MCF 10A (cell line): ENCODE measurements at regions of chr9 and their contacts with region 1.

Region 1: DNA sequence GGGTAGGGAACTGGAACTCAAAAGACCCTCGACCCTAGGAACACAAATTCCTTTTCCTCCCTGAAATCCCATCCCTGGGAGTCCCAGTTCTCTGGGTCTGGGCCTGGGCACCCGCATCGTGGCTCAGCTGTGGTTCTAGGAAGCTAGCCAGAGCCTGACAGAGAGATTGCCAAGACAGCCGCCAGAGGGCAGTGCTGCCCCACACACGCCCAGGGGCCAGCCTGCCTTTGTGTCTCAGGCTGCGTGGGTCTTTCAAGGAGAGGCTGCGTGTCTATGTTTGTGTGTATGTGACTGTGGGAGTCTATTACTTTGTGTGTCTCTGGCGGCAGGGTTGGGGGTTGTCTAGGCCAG is 32.0 kb upstream of the TTLL11 start:
- DNase-seq: peak; percentile 79
- H3K4me3 Mint-ChIP-seq: no peak overlapping the region
- H3K27ac Mint-ChIP-seq: no peak overlapping the region
- H3K4me1 Mint-ChIP-seq: peaks cover 18% of the 10 kb centered on the region
- H3K27me3 Mint-ChIP-seq: peaks cover 11% of the 10 kb centered on the region
- CTCF ChIP-seq: peak; percentile 98

Region 2: DNA sequence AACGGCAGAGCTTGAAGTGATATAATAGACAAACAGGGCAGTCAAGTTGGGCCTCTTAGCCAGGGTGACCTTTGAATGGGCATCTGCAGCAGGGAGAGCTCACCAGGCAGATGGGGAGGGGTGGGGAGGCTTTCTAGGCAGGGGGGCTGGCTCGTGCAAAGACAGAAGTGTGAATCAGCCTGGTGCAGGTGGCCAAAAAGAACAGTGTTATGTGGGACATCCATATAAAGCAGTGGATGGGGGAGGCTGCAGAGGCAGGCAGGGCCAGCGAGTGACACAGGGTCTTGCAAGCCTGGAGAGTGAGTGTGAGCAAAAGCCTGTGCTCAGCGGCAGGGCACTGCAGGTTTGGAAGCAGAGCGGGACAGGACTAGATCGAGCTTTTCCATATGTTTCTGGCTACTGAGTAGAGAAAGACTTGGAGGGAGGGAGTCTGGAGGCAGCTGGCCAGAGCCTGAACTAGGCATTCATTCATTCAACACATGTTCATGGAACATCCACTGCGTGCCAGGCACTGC is 17.8 kb before region 1 on chr9:
- CTCF ChIA-PET with region 1: interaction called, 79 read pairs
- POLR2A ChIA-PET with region 1: no interaction called
- intact Hi-C with region 1: no loop called
- DNase-seq: no peak
- H3K4me3 Mint-ChIP-seq: no peak overlapping the region
- H3K27ac Mint-ChIP-seq: no peak overlapping the region
- H3K4me1 Mint-ChIP-seq: no peaks in the 10 kb centered on the region
- H3K27me3 Mint-ChIP-seq: peaks cover under 1% of the 10 kb centered on the region
- CTCF ChIP-seq: no peak

Region 3: DNA sequence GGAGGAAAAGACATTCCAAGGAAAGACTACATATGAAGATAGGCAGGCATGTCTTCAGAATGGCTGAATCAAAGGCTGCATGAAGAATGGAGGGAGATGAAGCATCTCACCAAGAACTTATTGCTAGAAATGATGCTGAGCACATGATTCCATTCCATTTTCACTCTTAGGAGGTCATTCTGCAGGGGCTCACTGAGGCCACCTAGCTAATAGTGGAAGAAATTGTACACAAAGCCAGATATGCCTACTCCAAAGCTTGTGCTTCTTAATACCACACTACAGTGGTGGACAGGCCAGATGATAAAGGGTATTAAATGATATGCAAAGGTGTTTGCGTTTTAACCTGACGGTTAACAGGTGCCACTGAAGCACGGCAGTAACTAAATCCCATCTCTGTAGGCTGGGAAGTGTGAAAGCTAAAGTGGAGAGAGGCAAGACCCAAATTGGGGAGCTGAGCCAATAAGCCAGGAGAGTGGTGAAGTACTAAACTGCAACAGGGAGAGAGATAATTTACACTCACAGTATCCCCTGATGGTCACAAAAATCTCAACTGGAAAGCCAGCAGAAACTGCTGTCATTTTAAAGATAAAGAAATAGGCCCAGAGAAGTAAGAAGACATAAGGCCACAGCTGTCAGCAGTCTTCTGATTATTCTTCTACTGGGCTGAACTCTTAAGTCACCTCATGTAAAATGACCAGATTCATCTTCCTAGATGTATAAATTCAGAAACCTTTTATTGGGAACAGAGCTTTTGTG is 19.9 kb after region 1 on chr9:
- CTCF ChIA-PET with region 1: interaction called, 30 read pairs
- POLR2A ChIA-PET with region 1: no interaction called
- intact Hi-C with region 1: no loop called
- DNase-seq: no peak
- H3K4me3 Mint-ChIP-seq: no peak overlapping the region
- H3K27ac Mint-ChIP-seq: no peak overlapping the region
- H3K4me1 Mint-ChIP-seq: no peaks in the 10 kb centered on the region
- H3K27me3 Mint-ChIP-seq: no peaks in the 10 kb centered on the region
- CTCF ChIP-seq: no peak

Region 4: DNA sequence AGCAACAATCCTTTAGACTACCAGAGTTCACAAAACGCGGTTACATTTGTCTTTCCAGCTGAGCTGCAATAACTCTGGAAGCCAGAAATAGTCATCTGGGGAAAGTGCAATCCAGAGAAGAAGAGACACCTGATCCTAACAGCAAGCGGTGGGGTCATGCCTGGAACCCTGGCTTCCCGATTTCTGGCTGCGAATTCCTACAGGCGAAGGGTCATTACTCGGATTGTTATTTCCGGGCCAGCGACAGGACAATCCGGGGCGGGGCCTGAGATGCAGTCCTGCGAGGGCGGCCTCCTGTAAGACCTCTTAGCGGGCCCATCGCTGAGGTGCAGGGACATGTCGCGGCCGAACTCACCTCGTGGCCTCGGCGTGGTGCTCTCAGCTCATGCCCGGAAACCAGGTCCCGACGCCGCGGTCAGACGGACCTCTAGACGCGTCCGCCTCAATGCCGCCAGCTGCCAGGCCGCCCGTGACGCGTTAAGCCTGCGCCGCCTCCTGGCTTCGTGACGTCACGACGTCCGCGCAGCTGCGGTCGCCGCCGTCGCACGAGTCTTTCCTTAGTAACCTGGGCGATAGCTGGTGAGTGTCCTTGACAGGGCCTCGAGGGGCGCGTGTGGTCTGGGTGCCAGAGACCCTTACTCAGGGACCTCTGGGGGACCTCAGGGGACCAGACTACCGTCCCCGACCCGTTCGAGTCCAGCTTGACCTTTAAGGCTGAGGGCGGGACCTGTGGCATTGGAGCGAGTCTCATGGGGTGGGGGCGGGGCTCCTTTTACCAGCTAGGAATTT is 139.4 kb after region 1 on chr9 and contains the starts of genes MRRF and RBM18:
- CTCF ChIA-PET with region 1: interaction called, 18 read pairs
- POLR2A ChIA-PET with region 1: interaction called, 3 read pairs
- intact Hi-C with region 1: no loop called
- DNase-seq: peak; percentile 89
- H3K4me3 Mint-ChIP-seq: peak within 1 kb of the TSS; percentile 97
- H3K27ac Mint-ChIP-seq: peak within 1 kb of the TSS; percentile 100
- H3K4me1 Mint-ChIP-seq: peaks cover 12% of the 10 kb centered on the region
- H3K27me3 Mint-ChIP-seq: no peaks in the 10 kb centered on the region
- CTCF ChIP-seq: no peak
- total RNA-seq, gene MRRF: 73.0 and 90.3 TPM in 2 replicates
- total RNA-seq, gene RBM18: 39.9 and 44.4 TPM in 2 replicates

Region 5: GRCh38 chr9:122453677-122454135 is 328.6 kb after region 1 on chr9:
- CTCF ChIA-PET with region 1: interaction called, 20 read pairs
- POLR2A ChIA-PET with region 1: no interaction called
- intact Hi-C with region 1: loop called (anchors 1 kb)
- DNase-seq: no peak
- H3K4me3 Mint-ChIP-seq: no peak overlapping the region
- H3K27ac Mint-ChIP-seq: peak overlapping the region; percentile 19
- H3K4me1 Mint-ChIP-seq: no peaks in the 10 kb centered on the region
- H3K27me3 Mint-ChIP-seq: peaks cover 43% of the 10 kb centered on the region
- CTCF ChIP-seq: no peak